ENCODE measurements at regions of chr2 and their contacts with region 1.

Region 1: GRCh38 chr2:157793053-157793612 is 83.0 kb downstream of the ACVR1 start:
- DNase-seq: no peak
- H3K4me3 Mint-ChIP-seq: no peak overlapping the region
- H3K27ac Mint-ChIP-seq: no peak overlapping the region
- H3K4me1 Mint-ChIP-seq: peaks cover 19% of the 10 kb centered on the region
- H3K27me3 Mint-ChIP-seq: no peaks in the 10 kb centered on the region

Region 2: DNA sequence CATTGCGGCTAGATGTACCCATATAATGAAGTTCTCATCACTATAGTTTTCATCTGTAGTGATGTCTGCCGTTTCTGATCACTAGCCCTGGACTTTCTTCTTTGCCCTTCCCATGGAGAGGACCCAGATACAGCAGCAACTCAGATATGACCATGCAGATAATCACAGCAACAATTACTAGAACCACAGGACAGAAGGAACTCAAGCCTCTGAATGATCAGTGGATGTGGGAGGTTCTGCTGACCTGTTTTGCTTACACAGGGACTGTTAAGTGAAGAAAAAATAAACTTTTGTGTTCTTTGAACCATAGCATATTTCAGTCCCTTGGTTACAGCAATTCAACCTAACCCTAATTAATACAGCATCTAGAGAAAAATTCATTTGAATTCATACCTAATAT is 20.3 kb after region 1 on chr2:
- CTCF ChIA-PET with region 1: no interaction called
- intact Hi-C with region 1: loop called (anchors 2 kb)
- DNase-seq: no peak
- H3K4me3 Mint-ChIP-seq: no peak overlapping the region
- H3K27ac Mint-ChIP-seq: no peak overlapping the region
- H3K4me1 Mint-ChIP-seq: peaks cover 5% of the 10 kb centered on the region
- H3K27me3 Mint-ChIP-seq: no peaks in the 10 kb centered on the region

Region 3: GRCh38 chr2:158656492-158657229 is 863.5 kb after region 1 on chr2:
- CTCF ChIA-PET with region 1: no interaction called
- intact Hi-C with region 1: no loop called
- DNase-seq: no peak
- H3K4me3 Mint-ChIP-seq: no peak overlapping the region
- H3K27ac Mint-ChIP-seq: no peak overlapping the region
- H3K4me1 Mint-ChIP-seq: no peaks in the 10 kb centered on the region
- H3K27me3 Mint-ChIP-seq: no peaks in the 10 kb centered on the region

Measured in activated naive CD4-positive, alpha-beta T cell treated with anti-CD3 and anti-CD28 coated beads for 36 hours (primary cell).